ENCODE measurements at regions of chr21 and their contacts with region 1.

Region 1: DNA sequence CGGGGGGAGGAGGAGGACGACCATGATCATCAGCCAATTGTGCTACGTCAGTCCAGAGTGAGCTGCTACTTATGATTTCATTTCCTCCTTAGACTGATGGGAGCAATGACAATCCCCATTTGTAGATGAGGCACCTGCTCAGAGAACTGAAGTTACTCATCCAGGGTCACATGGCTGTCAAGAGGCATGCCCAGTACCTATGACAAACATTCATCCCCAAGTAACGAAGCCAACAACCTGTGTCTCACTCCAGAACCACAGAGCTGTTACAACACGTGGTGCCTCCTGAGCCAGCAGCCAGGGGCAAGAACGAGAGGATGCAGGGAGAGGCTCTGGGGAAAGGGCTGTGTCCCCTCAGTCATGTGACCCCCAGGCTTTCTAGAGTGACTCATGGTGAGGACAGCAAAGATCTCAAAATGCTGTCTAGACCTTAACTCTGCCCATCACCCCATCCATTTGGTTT is 93.6 kb downstream of the SIM2 start:
- DNase-seq: no peak
- H3K4me3 ChIP-seq: no peak overlapping the region
- H3K27ac ChIP-seq: no peak overlapping the region
- H3K27me3 ChIP-seq: no peaks in the 10 kb centered on the region
- CTCF ChIP-seq: no peak

Region 2: DNA sequence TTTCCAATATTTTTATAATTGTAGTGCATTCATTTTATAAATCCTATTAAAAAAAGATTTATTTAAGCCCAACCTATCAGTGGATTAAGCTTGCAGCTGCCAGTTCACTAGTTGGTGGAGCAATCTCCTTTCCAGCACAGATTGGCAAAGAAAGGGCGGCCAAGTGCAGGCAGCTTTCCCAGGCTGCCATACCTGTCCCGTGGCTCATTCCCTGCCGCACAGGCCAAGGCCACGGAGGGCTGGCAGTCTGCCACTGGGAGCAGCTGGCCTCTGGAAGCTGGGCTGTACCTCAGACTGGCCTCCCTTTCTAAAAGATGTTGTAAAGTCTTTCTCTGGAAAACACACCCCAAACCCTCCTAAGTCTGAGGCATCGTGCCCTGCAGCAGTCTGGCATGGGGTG is 19.4 kb before region 1 on chr21:
- CTCF ChIA-PET with region 1: no interaction called
- POLR2A ChIA-PET with region 1: no interaction called
- DNase-seq: peak; percentile 68
- H3K4me3 ChIP-seq: no peak overlapping the region
- H3K27ac ChIP-seq: peak overlapping the region; percentile 39
- H3K27me3 ChIP-seq: peaks cover 2% of the 10 kb centered on the region
- CTCF ChIP-seq: no peak

Region 3: GRCh38 chr21:36810443-36810842 is 17.9 kb after region 1 on chr21:
- CTCF ChIA-PET with region 1: interaction called, 3 read pairs
- POLR2A ChIA-PET with region 1: interaction called, 11 read pairs
- DNase-seq: no peak
- H3K4me3 ChIP-seq: no peak overlapping the region
- H3K27ac ChIP-seq: no peak overlapping the region
- H3K27me3 ChIP-seq: no peaks in the 10 kb centered on the region
- CTCF ChIP-seq: no peak